AG04449 (cell line): ENCODE measurements at regions of chr1 and their contacts with region 1.

Region 1: GRCh38 chr1:161382214-161383019 is 14.7 kb upstream of the CFAP126 start:
- DNase-seq: no peak
- H3K4me3 ChIP-seq: no peak overlapping the region; the same call in 1 of the 2 replicates
- CTCF ChIP-seq: peak; percentile 31

Region 2: DNA sequence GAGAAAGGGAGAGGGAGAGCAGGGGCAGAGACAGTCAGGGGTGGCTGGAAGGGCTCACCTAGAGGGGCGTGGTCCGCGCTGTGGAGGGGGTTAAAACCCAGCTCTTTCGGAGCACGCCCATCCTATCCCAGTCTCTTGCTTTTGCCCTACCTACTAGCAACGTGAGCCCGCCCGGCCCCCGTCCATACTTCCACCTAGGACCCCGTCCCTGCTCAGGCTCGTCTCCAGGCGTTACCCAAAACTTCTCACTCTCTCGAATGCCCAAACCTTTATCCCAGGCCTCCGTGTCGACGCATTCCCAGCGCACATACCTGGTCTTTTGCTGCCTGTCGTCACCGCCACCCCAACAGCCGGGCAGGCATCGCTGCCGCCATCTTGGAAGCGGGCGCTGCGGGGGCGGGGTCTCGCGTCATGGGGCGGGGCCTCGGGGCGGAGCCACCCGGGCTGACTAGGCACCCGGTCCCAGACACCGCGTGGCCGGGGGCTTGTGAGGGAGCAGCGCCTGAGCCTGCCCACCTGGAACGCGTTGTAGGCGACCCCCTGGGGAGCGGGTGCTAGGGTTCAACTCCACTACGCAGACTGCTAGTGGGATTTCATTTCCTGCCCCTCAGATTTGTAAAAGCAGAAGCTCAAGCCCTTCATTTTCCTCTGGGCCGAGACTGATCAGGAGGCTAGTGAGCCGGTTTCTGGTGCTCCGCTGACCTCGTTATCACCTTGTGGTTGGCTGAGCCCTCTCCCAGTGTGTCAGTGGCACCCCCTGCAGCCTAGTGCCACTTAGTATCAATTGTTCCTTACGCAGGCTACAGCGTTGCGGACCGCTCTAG is 205.1 kb before region 1 on chr1 and contains the start of gene B4GALT3:
- CTCF ChIA-PET with region 1: interaction called, 25 read pairs
- POLR2A ChIA-PET with region 1: no interaction called
- DNase-seq: no peak
- H3K4me3 ChIP-seq: peak within 1 kb of the TSS; percentile 99
- CTCF ChIP-seq: no peak

Region 3: DNA sequence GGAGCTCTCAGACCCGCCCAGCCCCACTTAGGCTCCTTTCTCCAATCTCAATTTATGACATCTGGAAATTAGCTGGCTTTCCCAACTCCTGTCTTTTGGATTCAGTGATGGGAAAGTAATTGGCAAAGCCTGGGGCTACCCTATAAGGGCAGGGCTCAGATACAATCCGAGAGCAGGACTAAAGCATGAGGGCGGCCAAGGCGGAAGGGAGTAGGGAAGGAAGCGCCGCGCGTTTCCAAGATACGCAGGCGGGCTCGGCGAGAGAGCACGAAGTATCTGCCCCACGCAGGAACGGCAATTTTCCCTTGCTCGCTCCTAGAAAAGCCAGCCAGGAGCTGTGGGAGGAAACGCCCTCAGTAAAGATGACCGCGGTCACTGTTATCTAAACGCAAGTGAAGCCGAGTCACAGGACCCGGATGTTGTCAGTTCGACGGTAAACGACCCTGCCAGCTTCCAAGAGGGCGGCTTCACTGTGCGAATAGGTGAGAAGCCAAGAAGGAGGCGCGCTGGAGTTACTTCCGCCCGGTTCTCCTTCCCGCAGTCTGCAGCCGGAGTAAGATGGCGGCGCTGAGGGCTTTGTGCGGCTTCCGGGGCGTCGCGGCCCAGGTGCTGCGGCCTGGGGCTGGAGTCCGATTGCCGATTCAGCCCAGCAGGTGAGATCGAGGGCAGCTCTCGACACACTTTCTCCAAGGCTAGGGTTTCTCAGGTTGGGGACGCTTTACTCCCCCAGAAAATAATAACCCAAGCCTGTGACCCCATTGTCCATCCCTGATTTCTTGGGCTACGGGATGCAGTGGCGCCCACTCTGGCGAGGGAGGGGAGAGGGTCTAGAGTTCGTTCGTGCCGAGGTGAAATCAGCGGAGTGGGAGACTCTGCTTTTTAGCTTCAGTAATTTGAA is 180.3 kb before region 1 on chr1 and contains the start of gene NDUFS2:
- CTCF ChIA-PET with region 1: interaction called, 46 read pairs
- POLR2A ChIA-PET with region 1: no interaction called
- DNase-seq: peak; percentile 95
- H3K4me3 ChIP-seq: peak within 1 kb of the TSS; percentile 95
- CTCF ChIP-seq: peak; percentile 47

Region 4: DNA sequence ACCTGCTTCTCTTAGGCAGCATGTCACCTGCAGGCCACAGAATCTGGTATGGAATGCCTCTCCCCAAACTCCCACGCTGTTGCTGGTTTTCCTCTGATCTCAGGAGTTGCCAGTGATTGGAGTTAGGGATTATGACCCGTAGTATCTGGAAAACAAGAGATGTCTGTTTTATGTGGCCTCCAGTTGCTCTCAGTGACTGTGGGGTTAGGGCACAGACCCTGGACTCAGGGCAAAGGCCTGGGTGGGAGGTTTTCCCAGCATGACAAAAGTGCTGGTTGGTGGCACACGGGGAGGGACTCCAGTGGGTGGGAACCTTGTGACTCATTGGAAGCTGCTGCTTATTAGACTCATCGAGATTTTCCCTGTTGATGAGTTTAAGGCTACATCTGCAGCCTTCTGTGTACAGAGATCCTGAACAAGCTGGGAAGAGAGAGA is 144.4 kb before region 1 on chr1 and contains the start of gene NR1I3:
- CTCF ChIA-PET with region 1: interaction called, 16 read pairs
- POLR2A ChIA-PET with region 1: no interaction called
- DNase-seq: no peak
- H3K4me3 ChIP-seq: no peak within 1 kb of the TSS
- CTCF ChIP-seq: no peak

Region 5: GRCh38 chr1:161357073-161357472 is 25.3 kb before region 1 on chr1:
- CTCF ChIA-PET with region 1: interaction called, 10 read pairs
- POLR2A ChIA-PET with region 1: no interaction called
- DNase-seq: no peak
- H3K4me3 ChIP-seq: no peak overlapping the region
- CTCF ChIP-seq: no peak

Region 6: DNA sequence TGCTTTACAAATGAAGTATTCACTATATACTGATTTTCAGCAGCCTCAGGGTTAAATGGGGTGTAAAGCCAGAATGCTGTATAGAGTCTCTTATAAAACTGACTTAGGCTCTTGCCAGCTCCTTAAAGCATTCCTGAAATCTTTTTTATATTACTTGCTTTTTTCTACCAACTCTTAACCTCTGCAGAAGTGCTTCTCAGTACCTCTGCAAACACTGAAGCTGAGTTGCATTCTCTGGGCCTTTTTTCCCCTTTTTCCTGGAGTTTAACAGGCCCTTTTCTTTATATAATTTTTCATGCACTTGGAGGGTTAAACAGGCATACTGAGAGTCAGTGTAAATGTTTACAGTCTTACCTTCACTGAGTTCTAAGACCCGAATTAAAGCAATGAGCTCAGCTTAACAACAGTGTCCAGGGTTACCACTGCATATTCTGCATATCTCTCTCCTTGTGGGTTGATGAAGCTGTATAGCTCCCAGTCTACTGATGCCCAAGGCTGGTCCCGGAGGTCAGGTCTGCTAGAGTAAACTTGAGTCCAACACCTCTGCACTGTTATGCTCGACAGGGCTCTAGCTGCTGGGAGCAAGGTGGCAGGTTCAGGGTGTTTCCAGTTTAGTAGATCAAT is 26.1 kb after region 1 on chr1:
- CTCF ChIA-PET with region 1: no interaction called
- POLR2A ChIA-PET with region 1: no interaction called
- DNase-seq: no peak
- H3K4me3 ChIP-seq: no peak overlapping the region
- CTCF ChIP-seq: no peak